Endothelial cell of umbilical vein (primary cell): ENCODE measurements at regions of chr7 and their contacts with region 1.

Region 1: GRCh38 chr7:143008007-143008901 is 18.7 kb downstream of the OR9A2 start:
- DNase-seq: peak; percentile 62
- H3K4me3 ChIP-seq: no peak overlapping the region
- H3K27ac ChIP-seq: no peak overlapping the region
- H3K4me1 ChIP-seq: peaks cover under 1% of the 10 kb centered on the region
- H3K27me3 ChIP-seq: peaks cover 15 to 18% of the 10 kb centered on the region in 2 experiments
- CTCF ChIP-seq: peak; percentile 88 to 91
- POLR2A ChIP-seq: no peak

Region 2: GRCh38 chr7:142516038-142516501 is 492.2 kb before region 1 on chr7:
- CTCF ChIA-PET with region 1: interaction called, 16 read pairs
- POLR2A ChIA-PET with region 1: no interaction called
- dilution Hi-C with region 1: no loop called
- intact Hi-C with region 1: no loop called
- DNase-seq: peak; percentile 65
- H3K4me3 ChIP-seq: no peak overlapping the region
- H3K27ac ChIP-seq: no peak overlapping the region
- H3K4me1 ChIP-seq: no peaks in the 10 kb centered on the region
- H3K27me3 ChIP-seq: peaks cover 9 to 13% of the 10 kb centered on the region in 2 experiments
- CTCF ChIP-seq: peak; percentile 75 to 79
- POLR2A ChIP-seq: no peak

Region 3: DNA sequence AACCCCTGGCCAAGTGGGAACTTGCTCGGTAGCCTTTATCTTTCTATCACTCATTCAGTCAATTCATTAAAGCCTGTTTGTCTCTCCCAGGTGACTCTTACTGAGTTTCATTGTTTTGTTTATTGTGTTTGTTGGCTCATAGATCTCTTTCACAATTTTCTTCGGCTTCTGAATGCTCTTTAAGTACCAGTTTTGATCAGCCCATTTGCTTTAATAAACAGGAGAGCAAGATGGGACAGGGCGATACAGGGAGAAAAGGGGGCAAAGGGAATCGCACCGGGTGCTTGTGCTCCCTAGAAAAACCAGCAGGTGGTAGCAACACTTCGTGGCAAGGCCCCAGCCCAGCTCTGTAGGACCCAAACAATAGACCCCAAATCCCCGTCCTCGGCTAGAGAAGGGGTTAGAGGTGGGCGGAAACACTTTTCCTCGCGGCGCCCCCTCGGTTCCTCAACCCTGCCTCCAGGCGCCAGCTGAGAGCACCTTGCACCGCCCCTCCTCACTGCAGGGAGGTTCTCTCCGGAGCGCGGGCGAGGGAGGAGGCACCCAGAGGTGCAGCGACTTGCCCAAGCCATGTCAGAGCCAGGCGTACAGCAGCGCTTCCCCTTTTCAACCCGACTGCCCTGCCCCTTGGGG is 154.4 kb before region 1 on chr7:
- CTCF ChIA-PET with region 1: interaction called, 33 read pairs
- POLR2A ChIA-PET with region 1: no interaction called
- dilution Hi-C with region 1: no loop called
- intact Hi-C with region 1: loop called (anchors 1 kb)
- DNase-seq: peak; percentile 77
- H3K4me3 ChIP-seq: peak overlapping the region; percentile 48 to 73 (median 65)
- H3K27ac ChIP-seq: no peak overlapping the region
- H3K4me1 ChIP-seq: peaks cover 3% of the 10 kb centered on the region
- H3K27me3 ChIP-seq: peaks cover 7 to 10% of the 10 kb centered on the region in 2 experiments
- CTCF ChIP-seq: peak; percentile 67 to 87
- POLR2A ChIP-seq: no peak

Region 4: DNA sequence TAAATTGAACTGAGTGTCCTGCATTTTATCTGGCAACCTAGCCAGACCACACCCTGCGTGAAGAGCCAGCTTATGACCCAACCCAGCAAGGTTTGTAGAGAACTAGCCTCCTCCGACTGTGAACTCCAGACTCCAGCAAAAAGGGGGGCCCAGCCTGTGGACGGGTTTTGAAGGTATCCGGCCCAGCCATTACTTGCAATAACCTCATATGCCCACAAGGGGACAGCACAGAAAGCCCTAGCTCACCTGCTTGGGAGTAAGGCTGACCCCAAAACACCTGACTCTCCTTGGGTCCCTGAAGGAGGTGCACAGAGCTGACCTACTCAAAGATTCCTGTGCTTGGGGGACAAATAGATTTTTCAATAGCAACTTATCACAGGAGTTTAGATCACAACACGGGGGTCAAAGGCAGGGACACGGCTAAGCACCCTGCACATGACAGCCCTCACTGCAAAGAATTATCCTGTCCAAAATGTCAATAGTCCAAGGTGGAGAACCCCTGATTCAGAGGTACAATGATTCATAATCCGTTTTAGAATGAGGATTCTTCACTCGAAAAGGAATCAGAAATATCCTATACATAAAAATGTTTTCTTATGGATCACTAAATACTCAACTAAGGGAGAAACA is 127.3 kb before region 1 on chr7:
- CTCF ChIA-PET with region 1: interaction called, 38 read pairs
- POLR2A ChIA-PET with region 1: no interaction called
- dilution Hi-C with region 1: no loop called
- intact Hi-C with region 1: loop called (anchors 1 kb)
- DNase-seq: peak; percentile 42
- H3K4me3 ChIP-seq: no peak overlapping the region
- H3K27ac ChIP-seq: no peak overlapping the region
- H3K4me1 ChIP-seq: no peaks in the 10 kb centered on the region
- H3K27me3 ChIP-seq: peaks cover 0 to 2% of the 10 kb centered on the region in 2 experiments
- CTCF ChIP-seq: peak; percentile 76 to 83
- POLR2A ChIP-seq: no peak

Region 5: GRCh38 chr7:142901426-142902259 is 106.6 kb before region 1 on chr7:
- CTCF ChIA-PET with region 1: no interaction called
- POLR2A ChIA-PET with region 1: no interaction called
- dilution Hi-C with region 1: no loop called
- intact Hi-C with region 1: no loop called
- DNase-seq: no peak
- H3K4me3 ChIP-seq: no peak overlapping the region
- H3K27ac ChIP-seq: no peak overlapping the region
- H3K4me1 ChIP-seq: no peaks in the 10 kb centered on the region
- H3K27me3 ChIP-seq: no peaks in the 10 kb centered on the region
- CTCF ChIP-seq: no peak
- POLR2A ChIP-seq: no peak

Region 6: DNA sequence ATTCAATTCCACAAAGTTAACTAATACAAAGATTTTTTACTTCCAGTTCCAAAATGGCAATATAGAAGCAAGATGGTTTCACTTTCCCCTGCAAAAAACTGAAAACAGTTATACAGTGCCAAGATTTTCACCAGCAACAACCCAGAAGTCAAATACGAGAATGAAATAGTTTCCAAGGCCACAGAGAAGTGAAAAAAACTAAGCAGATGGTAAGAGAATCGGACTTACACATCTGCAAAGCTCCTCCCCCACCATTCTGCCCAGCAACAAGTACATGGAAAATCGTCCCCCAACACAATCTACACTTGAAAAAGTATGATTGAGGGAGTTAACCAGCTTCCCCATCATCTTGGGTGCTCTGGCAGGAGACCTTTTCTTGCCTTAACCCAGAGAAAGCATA is 15.8 kb before region 1 on chr7:
- CTCF ChIA-PET with region 1: interaction called, 15 read pairs
- POLR2A ChIA-PET with region 1: no interaction called
- dilution Hi-C with region 1: no loop called
- intact Hi-C with region 1: no loop called
- DNase-seq: no peak
- H3K4me3 ChIP-seq: no peak overlapping the region
- H3K27ac ChIP-seq: no peak overlapping the region
- H3K4me1 ChIP-seq: no peaks in the 10 kb centered on the region
- H3K27me3 ChIP-seq: peaks cover 0 to 4% of the 10 kb centered on the region in 2 experiments
- CTCF ChIP-seq: no peak
- POLR2A ChIP-seq: no peak